AG04449 (cell line): ENCODE measurements at regions of chrX and their contacts with region 1.

Region 1: GRCh38 chrX:102950908-102951866 is 14.1 kb downstream of the RAB40AL start:
- DNase-seq: no peak
- H3K4me3 ChIP-seq: peak overlapping the region; percentile 12; the same call in 1 of the 2 replicates
- CTCF ChIP-seq: peak; percentile 61

Region 2: GRCh38 chrX:102966701-102967100 is 15.5 kb after region 1 on chrX:
- CTCF ChIA-PET with region 1: interaction called, 51 read pairs
- POLR2A ChIA-PET with region 1: no interaction called
- DNase-seq: no peak
- H3K4me3 ChIP-seq: no peak overlapping the region
- CTCF ChIP-seq: no peak

Region 3: DNA sequence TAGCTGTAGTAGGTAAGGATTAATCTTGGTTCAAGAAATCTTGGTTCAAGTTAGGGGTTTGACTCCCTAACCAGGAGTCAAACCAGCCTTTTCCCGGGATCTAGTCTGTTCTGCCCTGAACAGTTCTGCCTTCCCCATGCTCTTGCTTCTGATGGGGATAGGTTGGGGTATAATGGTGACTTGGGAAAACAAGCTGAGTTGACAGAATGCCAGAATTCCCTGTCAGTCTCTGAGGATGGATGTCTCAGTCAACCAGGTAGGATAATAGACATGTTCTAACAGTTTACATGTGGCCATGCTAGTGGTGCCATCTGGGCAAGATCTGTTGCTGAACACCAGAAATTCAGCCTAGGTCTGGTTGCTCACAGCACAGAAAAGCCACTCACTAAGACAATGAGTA is 37.3 kb after region 1 on chrX:
- CTCF ChIA-PET with region 1: interaction called, 16 read pairs
- POLR2A ChIA-PET with region 1: no interaction called
- DNase-seq: no peak
- H3K4me3 ChIP-seq: no peak overlapping the region
- CTCF ChIP-seq: no peak

Region 4: GRCh38 chrX:103017542-103017941 is 66.4 kb after region 1 on chrX:
- CTCF ChIA-PET with region 1: interaction called, 26 read pairs
- POLR2A ChIA-PET with region 1: no interaction called
- DNase-seq: no peak
- H3K4me3 ChIP-seq: no peak overlapping the region
- CTCF ChIP-seq: peak; percentile 16

Region 5: GRCh38 chrX:103170216-103170615 is 219.0 kb after region 1 on chrX:
- CTCF ChIA-PET with region 1: interaction called, 73 read pairs
- POLR2A ChIA-PET with region 1: no interaction called
- DNase-seq: no peak
- H3K4me3 ChIP-seq: no peak overlapping the region
- CTCF ChIP-seq: no peak